CD4-positive, alpha-beta memory T cell (primary cell): ENCODE measurements at regions of chr7 and their contacts with region 1.

Region 1: GRCh38 chr7:123624527-123625183 is 23.0 kb downstream of the ASB15 start:
- DNase-seq: peak; percentile 39 to 45 (median 40)
- H3K4me3 ChIP-seq: no peak overlapping the region
- H3K4me3 Mint-ChIP-seq: peak overlapping the region in 2 of 8 donors; percentile 31 to 51
- H3K27ac ChIP-seq: no peak overlapping the region
- H3K27ac Mint-ChIP-seq: no peak overlapping the region
- H3K4me1 ChIP-seq: no peaks in the 10 kb centered on the region
- H3K4me1 Mint-ChIP-seq: peaks cover 0 to 5% (median 1%) of the 10 kb centered on the region in 4 donors
- H3K27me3 ChIP-seq: no peaks in the 10 kb centered on the region
- H3K27me3 Mint-ChIP-seq: peaks cover 2 to 5% of the 10 kb centered on the region in 2 donors

Region 2: GRCh38 chr7:123635551-123636359 is 11.1 kb after region 1 on chr7:
- CTCF ChIA-PET with region 1: interaction called, 12 read pairs
- POLR2A ChIA-PET with region 1: no interaction called
- intact Hi-C with region 1: no loop called
- DNase-seq: no peak
- H3K4me3 ChIP-seq: no peak overlapping the region
- H3K4me3 Mint-ChIP-seq: no peak overlapping the region
- H3K27ac ChIP-seq: no peak overlapping the region
- H3K27ac Mint-ChIP-seq: no peak overlapping the region
- H3K4me1 ChIP-seq: no peaks in the 10 kb centered on the region
- H3K4me1 Mint-ChIP-seq: no peaks in the 10 kb centered on the region
- H3K27me3 ChIP-seq: no peaks in the 10 kb centered on the region
- H3K27me3 Mint-ChIP-seq: peaks cover 7 to 15% of the 10 kb centered on the region in 2 donors

Region 3: GRCh38 chr7:123823898-123824753 is 199.5 kb after region 1 on chr7:
- CTCF ChIA-PET with region 1: no interaction called
- POLR2A ChIA-PET with region 1: no interaction called
- intact Hi-C with region 1: no loop called
- DNase-seq: peak in 1 of 5 donors; percentile 8
- H3K4me3 ChIP-seq: no peak overlapping the region
- H3K4me3 Mint-ChIP-seq: peak overlapping the region in 1 of 8 donors; percentile 9
- H3K27ac ChIP-seq: no peak overlapping the region
- H3K27ac Mint-ChIP-seq: no peak overlapping the region
- H3K4me1 ChIP-seq: peaks cover 7% of the 10 kb centered on the region
- H3K4me1 Mint-ChIP-seq: peaks cover 6 to 11% (median 6%) of the 10 kb centered on the region in 4 donors
- H3K27me3 ChIP-seq: no peaks in the 10 kb centered on the region
- H3K27me3 Mint-ChIP-seq: peaks cover 2 to 5% of the 10 kb centered on the region in 2 donors

Region 4: DNA sequence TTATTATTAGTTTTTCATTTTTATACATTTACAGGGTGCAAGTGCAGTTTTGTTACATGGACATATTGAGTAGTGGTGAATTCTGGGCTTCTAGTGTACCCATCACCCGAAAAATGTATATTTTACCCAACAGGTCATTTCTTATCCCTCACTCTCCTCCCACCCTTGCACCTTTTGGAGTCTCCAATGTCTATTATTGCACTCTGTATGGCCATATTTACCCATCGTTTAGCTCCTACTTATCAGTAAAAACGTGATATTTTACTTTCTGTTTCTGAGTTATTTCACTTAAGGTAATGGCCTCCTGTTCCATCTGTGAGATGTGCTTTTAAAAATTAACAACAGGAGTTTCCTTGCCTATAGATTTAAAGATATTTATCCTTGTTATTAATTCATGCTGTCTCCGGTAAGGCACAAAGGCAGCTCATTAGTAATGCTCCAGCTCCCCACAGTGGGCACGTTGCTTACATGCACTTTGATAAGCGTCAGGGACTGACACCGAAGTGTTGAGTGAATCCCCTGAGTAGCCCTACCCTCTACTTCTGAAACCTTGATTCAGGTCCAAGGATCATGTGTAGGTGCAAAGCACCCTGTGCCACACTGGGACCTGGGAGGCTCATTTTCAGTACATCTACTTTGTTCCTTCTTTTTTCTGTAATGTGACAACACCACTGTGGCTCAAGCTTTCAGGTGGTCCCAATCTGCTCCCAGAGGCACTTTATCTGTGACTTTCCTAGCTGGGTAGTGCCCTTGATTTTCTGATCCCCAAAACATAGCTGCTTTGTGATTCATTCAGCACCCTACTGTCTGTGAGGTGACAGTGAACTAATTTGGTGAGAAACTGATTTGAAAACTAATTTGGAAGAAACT is 247.6 kb after region 1 on chr7:
- CTCF ChIA-PET with region 1: interaction called, 3 read pairs
- POLR2A ChIA-PET with region 1: no interaction called
- intact Hi-C with region 1: loop called (anchors 5 kb)
- DNase-seq: peak; percentile 6 to 35 (median 9)
- H3K4me3 ChIP-seq: no peak overlapping the region
- H3K4me3 Mint-ChIP-seq: no peak overlapping the region
- H3K27ac ChIP-seq: no peak overlapping the region
- H3K27ac Mint-ChIP-seq: no peak overlapping the region
- H3K4me1 ChIP-seq: no peaks in the 10 kb centered on the region
- H3K4me1 Mint-ChIP-seq: peaks cover 0 to 6% (median 3%) of the 10 kb centered on the region in 4 donors
- H3K27me3 ChIP-seq: no peaks in the 10 kb centered on the region
- H3K27me3 Mint-ChIP-seq: peaks cover 3 to 7% of the 10 kb centered on the region in 2 donors